B cell (primary cell): ENCODE measurements at regions of chr2 and their contacts with region 1.

Region 1: DNA sequence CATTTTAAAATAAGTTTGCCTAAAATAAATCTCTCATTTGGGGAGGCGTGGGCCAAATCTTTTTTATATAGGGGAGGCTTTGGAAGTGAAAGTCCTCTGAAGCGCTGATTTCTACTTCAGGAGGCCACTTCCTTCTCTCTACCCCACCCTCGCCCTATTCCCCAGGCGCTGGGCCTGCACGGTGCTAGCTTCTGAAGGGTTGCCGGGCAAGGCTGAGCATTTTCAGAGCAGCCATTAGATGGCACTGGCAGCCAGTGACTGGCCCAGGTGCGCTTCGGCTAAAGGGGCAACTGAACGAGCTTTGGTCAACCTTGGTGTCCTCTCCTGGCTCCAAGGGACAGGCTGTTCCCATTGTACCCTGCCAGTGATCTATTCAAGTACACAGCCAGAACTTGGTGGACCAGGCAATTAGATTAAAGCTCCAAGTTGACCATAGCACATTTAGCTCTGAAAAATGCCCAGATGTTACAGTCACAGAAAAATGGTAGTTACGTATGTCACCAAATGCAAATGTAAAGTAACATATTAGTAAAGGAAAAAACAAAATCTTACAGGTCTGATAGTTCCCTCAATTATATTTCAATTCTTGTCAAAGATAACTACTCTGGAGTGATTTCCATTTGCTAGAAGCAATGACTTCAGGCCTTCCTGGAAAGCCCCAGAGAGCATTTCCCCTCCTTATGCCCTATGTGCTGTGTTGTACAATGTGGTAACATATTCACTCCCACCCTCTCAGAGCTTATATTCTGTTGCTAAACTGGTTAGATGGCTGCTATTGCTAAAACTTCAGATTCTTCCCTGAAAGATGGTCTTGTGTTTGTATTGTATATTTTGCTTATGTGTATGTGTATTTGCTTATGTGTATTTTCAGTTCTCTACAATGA is 2.1 kb downstream of the POMC start:
- DNase-seq: peak; percentile 90
- ATAC-seq: peak; percentile 95
- H3K4me3 ChIP-seq: no peak overlapping the region
- H3K4me3 Mint-ChIP-seq: peak overlapping the region; percentile 76
- H3K27ac ChIP-seq: peak overlapping the region; percentile 34 to 46
- H3K27ac Mint-ChIP-seq: no peak overlapping the region
- H3K4me1 ChIP-seq: peaks cover 36 to 40% of the 10 kb centered on the region in 2 donors
- H3K4me1 Mint-ChIP-seq: peaks cover 41% of the 10 kb centered on the region
- H3K27me3 ChIP-seq: peaks cover 0 to 34% (median 21%) of the 10 kb centered on the region in 4 experiments
- H3K27me3 Mint-ChIP-seq: peaks cover 36% of the 10 kb centered on the region
- CTCF ChIP-seq: peak; percentile 67

Region 2: DNA sequence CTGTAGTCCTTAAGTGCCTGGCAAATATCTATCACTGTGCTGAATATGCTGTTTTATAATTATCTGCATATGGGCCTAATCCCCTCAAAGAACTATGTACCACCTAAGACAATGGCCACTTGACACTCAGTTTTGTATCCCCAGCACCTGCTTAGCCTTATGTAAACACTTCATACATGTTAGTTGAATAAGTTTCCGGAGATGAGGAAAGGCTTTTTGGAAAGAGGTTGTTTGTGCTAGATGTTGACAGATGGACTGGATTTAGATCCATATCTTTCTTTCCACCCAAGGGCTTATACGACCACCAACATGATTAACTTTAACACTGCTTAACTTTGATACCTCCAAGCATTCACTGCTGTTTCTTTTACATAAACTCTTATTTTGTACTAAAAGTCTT is 928.1 kb before region 1 on chr2:
- CTCF ChIA-PET with region 1: no interaction called
- POLR2A ChIA-PET with region 1: no interaction called
- intact Hi-C with region 1: no loop called
- DNase-seq: no peak
- ATAC-seq: no peak
- H3K4me3 ChIP-seq: no peak overlapping the region
- H3K4me3 Mint-ChIP-seq: no peak overlapping the region
- H3K27ac ChIP-seq: no peak overlapping the region
- H3K27ac Mint-ChIP-seq: peak overlapping the region; percentile 0
- H3K4me1 ChIP-seq: no peaks in the 10 kb centered on the region
- H3K4me1 Mint-ChIP-seq: no peaks in the 10 kb centered on the region
- H3K27me3 ChIP-seq: no peaks in the 10 kb centered on the region
- H3K27me3 Mint-ChIP-seq: no peaks in the 10 kb centered on the region
- CTCF ChIP-seq: no peak

Region 3: DNA sequence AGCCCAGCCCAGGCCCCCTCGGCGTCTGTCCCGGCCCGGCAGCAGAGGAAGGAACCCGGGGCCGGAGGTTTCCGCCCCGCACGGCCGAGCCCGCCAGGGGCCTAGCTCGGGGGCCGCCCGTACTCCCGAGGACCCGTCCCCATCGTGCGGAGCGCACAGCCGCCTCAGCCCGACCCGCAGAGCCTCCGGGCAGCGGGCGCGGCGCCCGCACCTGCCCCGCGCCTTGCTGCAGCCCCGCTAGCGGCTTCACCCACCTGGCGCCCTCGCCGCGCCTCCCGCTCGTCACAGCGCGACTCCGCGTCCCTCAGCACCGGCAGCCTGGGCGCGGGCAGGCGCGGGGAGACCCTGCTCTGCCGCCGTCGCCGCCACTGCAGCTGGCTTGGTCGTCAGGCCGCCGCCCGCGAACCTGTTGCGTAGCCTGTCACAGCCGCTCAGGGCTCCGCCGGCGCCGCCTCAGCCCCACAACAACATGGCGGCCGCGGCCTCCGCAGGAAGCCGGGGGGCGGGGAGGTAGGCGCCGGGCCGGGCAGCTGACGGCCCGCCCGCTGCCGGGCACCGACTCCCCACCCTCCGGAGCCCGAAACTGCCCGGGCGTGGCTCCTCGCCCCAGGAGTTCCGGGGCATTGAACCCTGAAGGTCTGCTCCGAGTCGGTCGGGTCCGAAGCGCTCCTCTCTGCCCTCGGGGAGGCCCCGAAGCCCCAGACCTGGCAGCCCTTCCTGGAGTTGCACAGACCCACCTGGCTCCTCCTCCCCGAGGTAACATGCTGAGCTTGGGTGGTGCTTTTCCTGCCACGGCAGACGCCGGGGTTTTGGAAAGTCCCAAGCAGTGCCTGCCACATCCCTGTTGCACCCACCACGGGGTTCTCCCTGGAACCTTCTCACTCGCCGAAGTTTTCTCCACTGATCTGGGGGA is 805.9 kb before region 1 on chr2 and contains the start of gene ITSN2:
- CTCF ChIA-PET with region 1: no interaction called
- POLR2A ChIA-PET with region 1: no interaction called
- intact Hi-C with region 1: no loop called
- DNase-seq: peak; percentile 96
- ATAC-seq: peak; percentile 84
- H3K4me3 ChIP-seq: peak within 1 kb of the TSS; percentile 75 to 91 (median 88)
- H3K4me3 Mint-ChIP-seq: peak within 1 kb of the TSS; percentile 93
- H3K27ac ChIP-seq: peak within 1 kb of the TSS; percentile 97 to 99
- H3K27ac Mint-ChIP-seq: peak within 1 kb of the TSS; percentile 99
- H3K4me1 ChIP-seq: peaks cover 40 to 46% of the 10 kb centered on the region in 2 donors
- H3K4me1 Mint-ChIP-seq: peaks cover 50% of the 10 kb centered on the region
- H3K27me3 ChIP-seq: no peaks in the 10 kb centered on the region
- H3K27me3 Mint-ChIP-seq: no peaks in the 10 kb centered on the region
- CTCF ChIP-seq: no peak
- total RNA-seq, gene ITSN2: 200 and 203 TPM in 2 replicates

Region 4: DNA sequence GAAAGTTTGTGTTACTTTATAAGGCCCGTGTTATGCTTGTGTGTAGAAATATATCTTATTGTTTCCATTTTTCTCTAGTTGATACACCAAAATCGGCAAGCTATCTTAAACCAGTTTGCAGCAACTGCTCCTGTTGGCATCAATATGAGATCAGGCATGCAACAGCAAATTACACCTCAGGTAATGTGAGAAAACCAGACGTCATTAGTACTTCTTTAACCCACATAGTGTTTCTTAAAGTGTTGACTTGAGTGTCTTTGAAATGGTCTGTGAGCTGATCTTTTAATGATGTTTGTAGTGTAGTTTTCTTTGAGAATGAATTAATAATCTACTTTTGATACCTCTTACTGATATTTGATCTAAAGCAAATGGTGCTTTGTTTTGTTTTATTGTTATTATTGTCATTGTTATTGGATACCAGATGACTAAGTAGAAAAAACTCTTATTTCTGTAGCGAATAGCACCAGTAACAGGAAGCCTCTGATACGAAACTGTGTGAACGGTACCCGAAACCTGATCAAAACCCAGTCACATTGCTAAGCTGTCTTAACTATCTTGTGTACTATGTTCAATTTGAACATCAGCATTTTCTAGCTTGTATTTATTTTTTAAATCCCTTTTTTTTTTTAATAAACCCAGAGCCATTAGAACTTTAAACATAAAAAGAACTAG is 426.7 kb before region 1 on chr2:
- CTCF ChIA-PET with region 1: no interaction called
- POLR2A ChIA-PET with region 1: no interaction called
- intact Hi-C with region 1: no loop called
- DNase-seq: no peak
- ATAC-seq: no peak
- H3K4me3 ChIP-seq: no peak overlapping the region
- H3K4me3 Mint-ChIP-seq: no peak overlapping the region
- H3K27ac ChIP-seq: no peak overlapping the region
- H3K27ac Mint-ChIP-seq: no peak overlapping the region
- H3K4me1 ChIP-seq: no peaks in the 10 kb centered on the region
- H3K4me1 Mint-ChIP-seq: no peaks in the 10 kb centered on the region
- H3K27me3 ChIP-seq: no peaks in the 10 kb centered on the region
- H3K27me3 Mint-ChIP-seq: no peaks in the 10 kb centered on the region
- CTCF ChIP-seq: no peak

Region 5: GRCh38 chr2:25197336-25198208 is 31.3 kb after region 1 on chr2:
- CTCF ChIA-PET with region 1: interaction called, 109 read pairs
- POLR2A ChIA-PET with region 1: interaction called, 3 read pairs
- intact Hi-C with region 1: loop called (anchors 1 kb)
- DNase-seq: no peak
- ATAC-seq: no peak
- H3K4me3 ChIP-seq: no peak overlapping the region
- H3K4me3 Mint-ChIP-seq: no peak overlapping the region
- H3K27ac ChIP-seq: no peak overlapping the region
- H3K27ac Mint-ChIP-seq: no peak overlapping the region
- H3K4me1 ChIP-seq: peaks cover 6 to 14% of the 10 kb centered on the region in 2 donors
- H3K4me1 Mint-ChIP-seq: peaks cover 14% of the 10 kb centered on the region
- H3K27me3 ChIP-seq: peaks cover 0 to 6% (median 1%) of the 10 kb centered on the region in 4 experiments
- H3K27me3 Mint-ChIP-seq: no peaks in the 10 kb centered on the region
- CTCF ChIP-seq: no peak

Region 6: GRCh38 chr2:25228848-25229278 is 62.6 kb after region 1 on chr2:
- CTCF ChIA-PET with region 1: interaction called, 93 read pairs
- POLR2A ChIA-PET with region 1: interaction called, 4 read pairs
- intact Hi-C with region 1: loop called (anchors 1 kb)
- DNase-seq: peak; percentile 79
- ATAC-seq: peak; percentile 74
- H3K4me3 ChIP-seq: no peak overlapping the region
- H3K4me3 Mint-ChIP-seq: no peak overlapping the region
- H3K27ac ChIP-seq: no peak overlapping the region
- H3K27ac Mint-ChIP-seq: peak overlapping the region; percentile 15
- H3K4me1 ChIP-seq: peaks cover 7 to 14% of the 10 kb centered on the region in 2 donors
- H3K4me1 Mint-ChIP-seq: peaks cover 19% of the 10 kb centered on the region
- H3K27me3 ChIP-seq: no peaks in the 10 kb centered on the region
- H3K27me3 Mint-ChIP-seq: no peaks in the 10 kb centered on the region
- CTCF ChIP-seq: peak; percentile 63

Region 7: DNA sequence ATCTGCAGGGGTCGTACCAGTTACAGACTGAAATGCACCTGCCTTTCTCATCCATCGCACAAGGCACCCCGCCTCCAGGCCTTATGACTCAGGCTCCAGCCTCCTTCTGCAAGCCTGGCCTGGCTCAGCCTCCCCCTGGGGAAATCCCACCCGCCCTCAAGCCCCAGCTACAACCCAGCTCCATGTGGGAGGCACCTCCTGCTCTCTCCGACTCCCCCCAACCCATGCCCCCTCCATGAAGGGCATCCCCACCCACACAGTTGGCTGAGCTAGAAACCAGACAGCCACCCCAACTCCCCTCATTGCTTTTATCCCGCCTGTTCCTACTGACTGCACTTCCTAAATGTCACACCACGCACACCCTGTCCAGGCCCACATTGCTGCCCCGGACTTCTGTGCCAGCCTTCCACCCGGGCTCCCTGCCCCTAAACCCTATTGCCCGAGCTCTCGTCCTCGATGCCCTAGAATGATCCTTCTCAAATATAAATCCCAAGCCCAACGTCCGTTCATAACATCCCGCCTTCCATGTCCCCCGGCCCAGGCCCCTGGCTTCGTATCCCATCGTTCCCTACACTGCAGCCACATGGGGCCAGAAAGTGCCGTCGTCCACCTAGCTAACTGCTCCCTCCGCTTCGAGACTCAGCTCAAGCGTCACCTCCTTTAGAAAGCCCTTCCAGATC is 165.6 kb after region 1 on chr2:
- CTCF ChIA-PET with region 1: no interaction called
- POLR2A ChIA-PET with region 1: no interaction called
- intact Hi-C with region 1: no loop called
- DNase-seq: no peak
- ATAC-seq: no peak
- H3K4me3 ChIP-seq: no peak overlapping the region
- H3K4me3 Mint-ChIP-seq: no peak overlapping the region
- H3K27ac ChIP-seq: no peak overlapping the region
- H3K27ac Mint-ChIP-seq: no peak overlapping the region
- H3K4me1 ChIP-seq: peaks cover 14 to 21% of the 10 kb centered on the region in 2 donors
- H3K4me1 Mint-ChIP-seq: peaks cover 39% of the 10 kb centered on the region
- H3K27me3 ChIP-seq: peaks cover 0 to 7% (median 1%) of the 10 kb centered on the region in 4 experiments
- H3K27me3 Mint-ChIP-seq: no peaks in the 10 kb centered on the region
- CTCF ChIP-seq: no peak

Region 8: DNA sequence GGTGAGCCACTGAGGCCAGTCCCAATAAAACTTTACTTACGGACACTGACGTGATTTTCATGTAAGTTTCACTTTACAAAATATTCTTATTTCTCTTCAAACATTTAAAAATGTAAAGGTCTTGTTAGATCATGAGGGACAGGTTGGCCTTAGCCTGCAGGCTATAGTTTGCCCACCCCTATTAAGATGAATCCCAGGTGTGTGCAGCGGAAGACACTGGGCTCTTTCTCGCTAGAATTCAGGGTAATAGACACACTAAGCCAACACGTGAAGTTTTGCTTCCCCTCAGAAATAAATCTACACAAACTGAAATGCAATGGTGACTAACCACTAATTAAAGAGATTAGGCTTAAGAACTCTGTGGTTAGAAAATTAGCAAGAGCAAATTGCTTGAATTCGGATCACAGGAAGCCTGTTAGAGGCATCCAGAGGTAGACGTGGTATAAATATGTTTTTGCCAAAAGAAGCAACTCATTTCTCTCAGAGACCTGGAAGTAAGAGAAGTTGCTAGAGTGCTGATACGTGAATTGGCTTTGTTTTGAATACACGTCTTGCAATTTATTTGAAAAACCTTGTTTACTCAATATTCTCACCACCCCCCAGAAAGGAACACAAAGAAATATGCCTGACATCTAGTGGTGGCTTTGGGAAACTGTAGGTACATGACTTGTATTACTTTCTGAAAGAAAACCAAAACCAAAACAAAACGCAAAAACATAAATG is 355.6 kb after region 1 on chr2:
- CTCF ChIA-PET with region 1: interaction called, 8 read pairs
- POLR2A ChIA-PET with region 1: no interaction called
- intact Hi-C with region 1: loop called (anchors 1 kb)
- DNase-seq: peak; percentile 87
- ATAC-seq: peak; percentile 100
- H3K4me3 ChIP-seq: peak overlapping the region in 2 of 5 experiments; percentile 19 to 35
- H3K4me3 Mint-ChIP-seq: peak overlapping the region; percentile 3
- H3K27ac ChIP-seq: no peak overlapping the region
- H3K27ac Mint-ChIP-seq: no peak overlapping the region
- H3K4me1 ChIP-seq: peaks cover 7 to 16% of the 10 kb centered on the region in 2 donors
- H3K4me1 Mint-ChIP-seq: peaks cover 19% of the 10 kb centered on the region
- H3K27me3 ChIP-seq: no peaks in the 10 kb centered on the region
- H3K27me3 Mint-ChIP-seq: no peaks in the 10 kb centered on the region
- CTCF ChIP-seq: peak; percentile 84

Region 9: DNA sequence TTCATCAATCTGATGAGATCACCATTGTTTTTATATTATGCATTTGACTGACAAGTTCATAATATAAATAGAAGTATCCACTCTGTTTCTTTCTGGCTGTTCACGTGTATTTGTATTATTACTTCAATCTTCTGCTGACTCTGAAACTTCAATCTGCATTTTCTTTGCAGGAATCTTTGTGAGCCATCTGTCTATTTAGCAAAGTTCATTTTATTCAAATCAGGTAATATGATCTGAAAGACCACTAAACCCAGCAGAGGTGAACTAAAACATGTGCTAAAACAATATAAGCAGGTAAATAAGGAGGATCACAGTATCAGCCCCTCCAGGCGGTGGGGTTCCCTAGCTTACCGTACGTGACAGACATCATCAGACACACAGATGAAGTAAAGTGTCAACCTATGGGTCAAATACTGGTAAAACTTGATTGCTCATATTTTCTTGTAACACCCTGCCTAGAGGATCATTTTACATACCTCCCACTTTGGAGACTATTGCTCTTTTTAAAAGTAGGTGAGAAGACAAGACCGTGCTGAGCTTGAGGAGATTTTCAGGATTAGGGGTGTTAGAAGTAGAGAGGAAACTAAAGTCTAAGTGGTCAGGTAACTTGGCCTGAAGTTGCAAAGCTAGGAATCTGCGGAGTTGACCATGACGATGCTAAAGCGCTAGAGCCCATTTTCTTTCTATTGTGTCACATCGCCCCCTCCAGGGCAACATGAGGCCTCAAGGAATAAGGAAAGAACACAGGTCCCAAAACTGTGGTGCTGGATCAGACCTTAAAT is 498.1 kb after region 1 on chr2:
- CTCF ChIA-PET with region 1: interaction called, 12 read pairs
- POLR2A ChIA-PET with region 1: no interaction called
- intact Hi-C with region 1: no loop called
- DNase-seq: peak; percentile 61
- ATAC-seq: peak; percentile 43
- H3K4me3 ChIP-seq: peak overlapping the region in 1 of 5 experiments; percentile 27
- H3K4me3 Mint-ChIP-seq: peak overlapping the region; percentile 64
- H3K27ac ChIP-seq: no peak overlapping the region
- H3K27ac Mint-ChIP-seq: no peak overlapping the region
- H3K4me1 ChIP-seq: peaks cover 0 to 8% of the 10 kb centered on the region in 2 donors
- H3K4me1 Mint-ChIP-seq: peaks cover 4% of the 10 kb centered on the region
- H3K27me3 ChIP-seq: no peaks in the 10 kb centered on the region
- H3K27me3 Mint-ChIP-seq: no peaks in the 10 kb centered on the region
- CTCF ChIP-seq: peak; percentile 62